Activated CD4-positive, alpha-beta T cell treated with anti-CD3 and anti-CD28 coated beads for 36 hours (primary cell): ENCODE measurements at regions of chr11 and their contacts with region 1.

Region 1: DNA sequence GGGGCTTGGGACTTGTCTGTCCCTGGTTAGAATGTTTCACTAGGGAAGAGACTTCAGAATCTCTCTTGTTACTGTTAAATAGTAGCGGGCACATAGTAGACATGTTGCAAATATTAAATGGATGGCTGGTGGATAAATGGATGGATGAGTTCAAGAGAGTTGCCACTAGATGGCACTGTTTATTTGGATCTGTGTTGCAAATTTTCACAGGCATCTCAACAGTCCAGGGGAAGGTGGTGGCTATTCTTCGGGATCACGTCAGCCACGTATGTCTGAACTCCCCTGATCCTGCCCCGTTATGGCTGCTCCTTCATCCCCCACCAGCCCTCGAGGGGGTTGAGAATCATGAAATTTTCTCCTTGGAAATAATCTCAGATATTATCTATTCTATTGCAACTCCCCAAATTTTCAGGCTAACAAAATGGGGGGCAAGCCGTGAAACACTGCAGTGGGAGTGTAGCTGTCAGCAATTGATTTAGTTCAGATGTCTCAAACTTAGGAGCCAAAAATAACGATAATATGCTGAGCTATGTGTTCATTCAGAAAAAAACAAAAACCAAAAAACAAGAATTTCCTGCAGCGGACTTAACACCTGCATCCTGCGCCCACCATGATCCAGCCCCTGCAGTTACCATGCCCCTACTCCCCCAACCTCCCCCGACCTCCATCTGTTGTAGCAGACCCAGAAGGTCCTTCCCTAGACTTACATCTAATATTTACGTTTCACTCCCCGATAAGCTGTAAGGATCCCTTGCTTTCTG is 29.1 kb upstream of the BIRC3 start:
- DNase-seq: peak; percentile 50
- ATAC-seq: peak; percentile 92
- H3K4me3 Mint-ChIP-seq: peak overlapping the region; percentile 34
- H3K27ac Mint-ChIP-seq: peak overlapping the region; percentile 59
- H3K4me1 Mint-ChIP-seq: peaks cover 24% of the 10 kb centered on the region
- H3K27me3 Mint-ChIP-seq: no peaks in the 10 kb centered on the region

Region 2: DNA sequence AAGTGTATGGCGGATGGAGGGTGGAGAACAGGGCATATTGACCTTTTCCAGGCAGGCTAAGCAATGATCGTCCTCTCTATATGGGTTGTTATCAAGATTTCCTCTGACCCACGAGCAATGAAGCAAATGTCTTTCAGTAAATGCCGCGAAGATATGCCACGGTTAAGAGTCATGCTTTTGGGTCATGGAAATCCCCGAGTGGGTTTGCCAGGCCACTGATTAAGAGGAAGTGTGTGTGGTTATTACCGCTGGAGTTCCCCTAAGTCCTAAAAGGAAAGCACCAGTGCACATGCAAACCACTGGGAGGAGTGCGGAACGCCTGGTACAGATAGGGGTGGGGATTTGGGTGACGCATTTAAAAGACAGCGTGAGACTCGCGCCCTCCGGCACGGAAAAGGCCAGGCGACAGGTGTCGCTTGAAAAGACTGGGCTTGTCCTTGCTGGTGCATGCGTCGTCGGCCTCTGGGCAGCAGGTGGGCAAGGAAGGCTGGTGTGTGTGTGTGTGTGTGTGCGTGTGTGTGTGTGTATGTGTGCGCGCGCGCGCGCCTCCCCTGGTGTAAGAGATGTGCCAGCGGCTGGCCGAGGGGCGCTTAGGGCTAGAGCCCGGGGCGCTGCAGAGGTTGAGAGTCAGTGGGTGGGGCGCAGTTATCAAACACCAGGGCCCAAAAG is 29.1 kb after region 1 on chr11 and contains the start of gene BIRC3:
- CTCF ChIA-PET with region 1: interaction called, 222 read pairs
- POLR2A ChIA-PET with region 1: interaction called, 3 read pairs
- intact Hi-C with region 1: loop called in 1 of 2 experiments (anchors 1 kb)
- DNase-seq: peak; percentile 95
- ATAC-seq: peak; percentile 85
- H3K4me3 Mint-ChIP-seq: peak within 1 kb of the TSS; percentile 96
- H3K27ac Mint-ChIP-seq: peak within 1 kb of the TSS; percentile 99
- H3K4me1 Mint-ChIP-seq: peaks cover 68% of the 10 kb centered on the region
- H3K27me3 Mint-ChIP-seq: no peaks in the 10 kb centered on the region
- total RNA-seq, gene BIRC3: 99.2 to 109 TPM

Region 3: DNA sequence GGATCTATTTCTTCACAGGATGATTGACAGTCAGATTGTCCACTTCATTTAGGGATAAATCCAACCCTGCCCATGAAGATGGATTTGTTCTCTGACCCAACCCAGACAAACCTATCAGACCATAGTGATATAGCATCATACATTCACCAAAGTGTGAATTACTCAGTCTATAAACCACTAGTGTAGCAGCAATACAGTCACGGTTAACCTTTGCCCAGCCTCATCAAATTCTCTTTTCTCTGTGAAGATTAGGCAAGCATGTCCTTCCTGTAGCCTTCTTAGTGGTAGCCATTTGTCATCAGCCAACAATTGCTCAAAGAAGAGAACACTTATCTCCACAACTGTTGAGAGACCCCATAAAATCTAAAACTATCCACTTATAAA is 44.5 kb after region 1 on chr11:
- CTCF ChIA-PET with region 1: interaction called, 15 read pairs
- POLR2A ChIA-PET with region 1: no interaction called
- intact Hi-C with region 1: no loop called
- DNase-seq: no peak
- ATAC-seq: peak; percentile 63
- H3K4me3 Mint-ChIP-seq: no peak overlapping the region
- H3K27ac Mint-ChIP-seq: peak overlapping the region; percentile 6
- H3K4me1 Mint-ChIP-seq: peaks cover 11% of the 10 kb centered on the region
- H3K27me3 Mint-ChIP-seq: no peaks in the 10 kb centered on the region

Region 4: GRCh38 chr11:102513869-102514268 is 225.7 kb after region 1 on chr11:
- CTCF ChIA-PET with region 1: interaction called, 9 read pairs
- POLR2A ChIA-PET with region 1: no interaction called
- intact Hi-C with region 1: loop called in 1 of 2 experiments (anchors 5 kb)
- DNase-seq: no peak
- ATAC-seq: no peak
- H3K4me3 Mint-ChIP-seq: no peak overlapping the region
- H3K27ac Mint-ChIP-seq: no peak overlapping the region
- H3K4me1 Mint-ChIP-seq: no peaks in the 10 kb centered on the region
- H3K27me3 Mint-ChIP-seq: peaks cover 2% of the 10 kb centered on the region

Region 5: GRCh38 chr11:102666331-102666957 is 378.3 kb after region 1 on chr11:
- CTCF ChIA-PET with region 1: interaction called, 12 read pairs
- POLR2A ChIA-PET with region 1: no interaction called
- intact Hi-C with region 1: loop called (anchors 1 kb)
- DNase-seq: peak; percentile 37
- ATAC-seq: peak; percentile 64
- H3K4me3 Mint-ChIP-seq: no peak overlapping the region
- H3K27ac Mint-ChIP-seq: no peak overlapping the region
- H3K4me1 Mint-ChIP-seq: no peaks in the 10 kb centered on the region
- H3K27me3 Mint-ChIP-seq: peaks cover 2% of the 10 kb centered on the region